ENCODE measurements at regions of chr4 and their contacts with region 1.

Region 1: DNA sequence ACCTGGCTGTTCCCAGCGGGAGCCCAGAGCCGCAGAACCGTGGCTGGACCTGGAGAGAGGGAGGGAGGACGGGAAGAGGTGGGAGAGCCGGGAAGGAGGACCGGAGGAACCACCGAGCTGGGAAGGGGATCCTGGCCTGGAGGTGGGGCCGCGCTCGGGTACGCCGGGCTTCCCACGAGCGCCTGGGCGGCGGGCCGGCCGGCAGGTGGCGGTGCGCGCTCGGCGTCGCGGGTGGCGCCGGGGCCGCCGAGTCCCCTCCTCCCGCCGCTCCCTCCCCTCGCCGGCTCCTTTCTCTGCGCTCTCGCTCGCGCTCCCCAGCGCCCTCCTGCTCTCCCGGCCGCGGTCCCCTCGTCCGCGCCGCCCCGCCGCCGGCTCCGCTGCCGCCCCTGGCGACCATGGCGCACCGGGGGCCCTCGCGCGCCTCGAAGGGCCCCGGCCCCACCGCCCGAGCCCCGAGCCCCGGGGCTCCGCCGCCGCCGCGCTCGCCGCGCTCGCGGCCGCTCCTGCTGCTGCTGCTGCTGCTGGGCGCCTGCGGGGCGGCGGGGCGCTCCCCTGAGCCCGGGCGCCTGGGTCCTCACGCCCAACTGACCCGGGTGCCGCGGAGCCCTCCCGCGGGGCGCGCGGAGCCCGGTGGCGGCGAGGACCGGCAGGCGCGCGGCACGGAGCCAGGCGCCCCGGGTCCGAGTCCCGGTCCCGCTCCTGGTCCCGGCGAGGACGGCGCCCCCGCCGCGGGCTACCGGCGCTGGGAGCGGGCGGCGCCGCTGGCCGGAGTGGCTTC is at the start of gene SORCS2:
- ATAC-seq: peak; percentile 86 to 94 (median 88)
- H3K4me3 ChIP-seq: peak within 1 kb of the TSS; percentile 45 to 58 (median 50)
- H3K27ac ChIP-seq: no peak within 1 kb of the TSS
- H3K4me1 ChIP-seq: peaks cover 26 to 36% of the 10 kb centered on the region in 2 donors
- total RNA-seq, gene SORCS2: 1.8 to 14.0 (median 5.3) TPM

Region 2: GRCh38 chr4:7462509-7462971 is 270.1 kb after region 1 on chr4:
- in situ Hi-C with region 1: loop called in 1 of 9 experiments (anchors 25 kb)
- ATAC-seq: peak in 7 of 8 experiments; percentile 12 to 73 (median 66)
- H3K4me3 ChIP-seq: no peak overlapping the region
- H3K27ac ChIP-seq: peak overlapping the region; percentile 50 to 80
- H3K4me1 ChIP-seq: peaks cover 44 to 55% of the 10 kb centered on the region in 2 donors

Region 3: DNA sequence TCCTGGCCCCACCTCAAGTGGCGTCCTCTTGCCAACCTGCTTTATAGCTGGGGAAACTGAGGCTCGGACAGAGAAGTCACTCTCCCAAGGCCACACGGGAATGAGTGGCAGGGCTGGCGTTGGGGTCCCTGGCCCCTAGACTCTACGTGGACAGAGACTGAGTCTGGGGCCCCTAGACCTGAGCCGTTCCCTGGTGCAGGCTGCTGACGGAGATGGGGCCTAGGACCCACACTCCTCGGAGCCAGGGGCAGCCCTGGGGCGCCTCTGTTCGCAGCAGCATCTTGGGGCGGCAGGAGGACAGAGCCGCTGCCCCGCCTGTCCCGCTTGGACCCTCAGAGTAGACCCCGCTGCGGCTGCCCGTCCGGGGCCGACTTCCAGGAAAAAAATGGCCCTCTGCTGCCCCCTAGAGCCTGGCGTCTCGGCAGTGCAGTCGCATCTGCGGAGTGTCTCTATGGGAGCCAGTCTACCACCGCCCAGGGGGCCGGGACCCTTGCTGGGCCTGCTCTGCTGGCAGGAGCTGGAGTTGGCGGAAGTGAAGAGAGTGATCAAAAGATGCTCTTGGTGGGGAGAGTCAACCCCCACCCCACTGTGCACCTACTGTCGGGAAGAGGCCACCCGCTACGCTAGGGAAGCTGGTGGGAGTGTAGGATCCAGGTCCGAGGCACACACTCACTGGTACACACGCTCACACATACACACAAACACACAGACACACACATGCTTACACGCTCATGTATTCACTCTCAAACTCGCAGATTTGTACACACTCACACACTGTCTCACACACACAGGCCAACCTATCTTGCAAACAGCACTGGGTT is 527.1 kb after region 1 on chr4:
- in situ Hi-C with region 1: loop called in 6 of 9 experiments (anchors 10 to 25 kb)
- ATAC-seq: peak; percentile 89 to 98 (median 96)
- H3K4me3 ChIP-seq: peak overlapping the region in 1 of 5 donors; percentile 21
- H3K27ac ChIP-seq: no peak overlapping the region
- H3K4me1 ChIP-seq: peaks cover 5 to 6% of the 10 kb centered on the region in 2 donors